Gastrocnemius medialis (tissue), 4 donors: ENCODE measurements at regions of chrX and their contacts with region 1.

Region 1: GRCh38 chrX:136147315-136147901 is at the start of gene FHL1:
- DNase-seq: peak in 1 of 2 donors; percentile 30
- ATAC-seq: peak; percentile 72 to 82
- H3K4me3 ChIP-seq: peak within 1 kb of the TSS; percentile 66 to 75 (median 70)
- H3K27ac ChIP-seq: peak within 1 kb of the TSS; percentile 73 to 78 (median 74)
- H3K4me1 ChIP-seq: no peaks in the 10 kb centered on the region
- H3K27me3 ChIP-seq: peaks cover 0 to 4% (median 0%) of the 10 kb centered on the region in 3 donors
- CTCF ChIP-seq: no peak
- POLR2A ChIP-seq: peak; percentile 45 to 63
- total RNA-seq, gene FHL1: 2,023 to 8,069 (median 7,102) TPM

Region 2: GRCh38 chrX:136055651-136056221 is 91.7 kb before region 1 on chrX:
- in situ Hi-C with region 1: no loop called
- intact Hi-C with region 1: loop called (anchors 5 kb)
- DNase-seq: peak; percentile 47 to 63
- ATAC-seq: peak; percentile 97 to 98
- H3K4me3 ChIP-seq: peak overlapping the region in 3 of 4 donors; percentile 20 to 35 (median 22)
- H3K27ac ChIP-seq: peak overlapping the region; percentile 70 to 86 (median 82)
- H3K4me1 ChIP-seq: peaks cover 8 to 15% of the 10 kb centered on the region in 2 donors
- H3K27me3 ChIP-seq: no peaks in the 10 kb centered on the region
- CTCF ChIP-seq: no peak
- POLR2A ChIP-seq: peak in 1 of 2 donors; percentile 45